Activated CD4-positive, alpha-beta memory T cell treated with anti-CD3 and anti-CD28 coated beads for 36 hours (primary cell): ENCODE measurements at regions of chr1 and their contacts with region 1.

Region 1: DNA sequence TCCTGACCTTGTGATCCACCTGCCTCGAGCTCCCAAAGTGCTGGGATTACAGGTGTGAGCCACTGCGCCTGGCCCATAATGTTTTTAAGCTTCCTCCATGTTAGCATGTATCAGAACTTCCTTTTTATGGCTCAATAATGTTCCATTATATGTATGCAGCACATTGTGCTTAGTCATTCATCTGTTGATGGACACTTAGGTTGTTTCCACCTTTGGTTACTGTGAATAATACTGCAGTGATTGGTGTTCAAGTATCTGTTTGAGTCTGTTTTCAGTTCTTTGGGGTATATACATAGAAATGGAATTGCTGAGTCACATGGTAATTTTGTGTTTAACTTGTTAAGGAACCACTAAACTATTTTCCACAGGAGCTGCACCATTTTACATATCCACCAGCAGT is 17.7 kb downstream of the CMPK1 start:
- DNase-seq: peak; percentile 20
- H3K4me3 Mint-ChIP-seq: no peak overlapping the region
- H3K27ac Mint-ChIP-seq: peak overlapping the region; percentile 88
- H3K4me1 Mint-ChIP-seq: peaks cover 31% of the 10 kb centered on the region
- H3K27me3 Mint-ChIP-seq: no peaks in the 10 kb centered on the region

Region 2: DNA sequence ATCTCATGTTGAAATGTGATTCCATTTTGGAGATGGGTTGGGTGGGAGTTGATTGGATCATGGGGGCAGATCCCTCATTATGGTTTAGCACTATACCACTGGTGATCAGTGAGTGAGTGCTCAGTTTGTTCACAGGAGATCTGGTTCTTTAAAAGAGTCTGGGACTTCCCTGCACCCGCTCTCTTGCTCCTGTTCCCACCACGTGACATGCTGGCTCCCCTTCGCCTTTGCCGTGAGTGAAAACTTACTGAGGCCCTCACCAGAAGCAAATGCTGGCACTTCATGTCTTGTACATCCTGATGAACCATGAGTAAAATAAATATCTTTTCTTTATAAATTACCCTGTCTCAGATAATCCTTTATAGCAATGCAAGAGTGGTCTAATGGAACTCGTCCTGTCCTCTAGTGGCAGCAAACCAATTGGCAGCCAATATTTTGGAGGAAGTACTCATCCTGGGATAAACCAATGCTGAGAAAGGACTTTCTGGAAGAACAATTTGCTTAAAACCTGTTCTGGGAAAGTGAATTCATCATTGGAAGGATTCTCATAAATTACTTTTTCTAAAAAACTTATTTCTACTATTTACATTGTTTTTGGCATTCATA is 382.2 kb before region 1 on chr1:
- CTCF ChIA-PET with region 1: no interaction called
- POLR2A ChIA-PET with region 1: no interaction called
- intact Hi-C with region 1: no loop called
- DNase-seq: no peak
- H3K4me3 Mint-ChIP-seq: no peak overlapping the region
- H3K27ac Mint-ChIP-seq: no peak overlapping the region
- H3K4me1 Mint-ChIP-seq: no peaks in the 10 kb centered on the region
- H3K27me3 Mint-ChIP-seq: peaks cover 14% of the 10 kb centered on the region

Region 3: DNA sequence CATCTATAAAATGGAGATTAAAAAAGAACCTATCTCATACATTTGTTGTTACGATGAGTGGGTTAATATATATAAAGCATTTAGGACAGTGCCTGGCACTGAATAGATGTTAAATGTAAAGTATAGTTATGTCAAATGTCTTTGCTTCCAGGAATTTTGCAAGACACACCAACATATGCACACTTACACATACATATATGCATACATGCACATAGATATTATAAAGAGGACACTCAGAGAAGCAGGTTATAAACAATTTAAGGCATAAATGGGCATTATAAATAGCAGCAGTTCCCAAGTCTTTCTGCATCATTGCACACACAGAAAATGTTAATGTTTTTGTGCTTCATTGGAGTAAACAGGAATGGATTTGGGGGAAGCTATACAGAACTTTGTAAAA is 314.5 kb before region 1 on chr1:
- CTCF ChIA-PET with region 1: no interaction called
- POLR2A ChIA-PET with region 1: no interaction called
- intact Hi-C with region 1: no loop called
- DNase-seq: no peak
- H3K4me3 Mint-ChIP-seq: no peak overlapping the region
- H3K27ac Mint-ChIP-seq: no peak overlapping the region
- H3K4me1 Mint-ChIP-seq: no peaks in the 10 kb centered on the region
- H3K27me3 Mint-ChIP-seq: peaks cover 5% of the 10 kb centered on the region

Region 4: DNA sequence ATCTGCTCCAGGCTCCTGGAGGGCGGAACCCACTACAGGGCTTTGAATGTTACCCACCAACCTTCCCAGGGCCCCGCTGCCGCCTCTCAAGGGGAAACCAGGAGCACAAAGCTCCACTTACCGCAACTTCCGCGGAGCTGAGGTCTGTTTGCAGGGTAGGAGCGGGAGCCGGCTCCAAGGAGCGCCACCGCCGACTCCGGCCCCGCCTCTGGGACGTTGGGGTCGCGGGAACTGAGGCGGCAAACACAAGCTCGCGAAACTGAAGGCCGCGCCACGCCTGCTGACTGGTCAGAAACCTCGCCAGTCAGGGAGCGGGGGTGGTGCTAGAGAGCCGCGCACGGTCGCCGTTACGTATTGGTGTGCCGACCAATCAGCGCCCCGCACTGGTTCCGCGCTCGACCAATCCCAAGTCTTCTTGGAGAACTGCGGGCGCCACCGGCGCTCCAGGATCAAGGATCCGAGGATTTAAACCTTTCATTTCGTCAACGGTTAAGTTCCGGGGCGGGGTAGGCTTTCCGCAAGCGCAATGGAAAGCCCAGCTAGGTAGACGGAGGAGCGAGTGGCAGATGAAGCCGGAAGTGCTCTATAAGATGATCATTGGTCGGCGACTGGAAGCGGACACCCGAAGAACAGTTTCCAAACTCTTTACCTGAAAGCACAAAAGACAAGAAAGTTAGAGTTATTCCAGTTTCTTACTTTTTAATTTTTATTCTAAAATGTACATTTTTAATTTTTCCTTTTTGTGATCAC is 37.2 kb before region 1 on chr1 and contains the start of gene STIL:
- CTCF ChIA-PET with region 1: no interaction called
- POLR2A ChIA-PET with region 1: interaction called, 11 read pairs
- intact Hi-C with region 1: loop called (anchors 1 kb)
- DNase-seq: peak; percentile 99
- H3K4me3 Mint-ChIP-seq: peak within 1 kb of the TSS; percentile 83
- H3K27ac Mint-ChIP-seq: peak within 1 kb of the TSS; percentile 95
- H3K4me1 Mint-ChIP-seq: peaks cover 6% of the 10 kb centered on the region
- H3K27me3 Mint-ChIP-seq: no peaks in the 10 kb centered on the region
- total RNA-seq, gene STIL: 31.3 to 33.6 TPM

Region 5: DNA sequence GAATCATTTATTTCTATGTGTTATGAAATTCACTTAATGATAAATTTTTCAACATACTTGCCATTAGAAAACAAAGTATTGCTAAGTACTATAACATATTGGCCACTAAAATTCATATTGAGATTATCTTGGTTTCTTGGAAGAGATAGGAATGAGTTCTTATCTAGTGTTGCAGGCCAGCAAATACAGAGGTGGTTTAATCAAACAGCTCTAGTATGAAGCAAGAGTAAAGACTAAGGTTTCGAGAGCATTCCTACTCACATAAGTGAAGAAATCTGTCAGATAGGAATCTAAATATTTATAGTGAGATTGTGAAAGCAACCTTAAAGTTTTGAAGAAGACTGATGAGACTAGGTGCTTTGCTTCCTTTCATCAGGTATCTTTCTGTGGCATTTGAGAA is 26.8 kb after region 1 on chr1:
- CTCF ChIA-PET with region 1: no interaction called
- POLR2A ChIA-PET with region 1: no interaction called
- intact Hi-C with region 1: no loop called
- DNase-seq: no peak
- H3K4me3 Mint-ChIP-seq: no peak overlapping the region
- H3K27ac Mint-ChIP-seq: no peak overlapping the region
- H3K4me1 Mint-ChIP-seq: no peaks in the 10 kb centered on the region
- H3K27me3 Mint-ChIP-seq: no peaks in the 10 kb centered on the region

Region 6: DNA sequence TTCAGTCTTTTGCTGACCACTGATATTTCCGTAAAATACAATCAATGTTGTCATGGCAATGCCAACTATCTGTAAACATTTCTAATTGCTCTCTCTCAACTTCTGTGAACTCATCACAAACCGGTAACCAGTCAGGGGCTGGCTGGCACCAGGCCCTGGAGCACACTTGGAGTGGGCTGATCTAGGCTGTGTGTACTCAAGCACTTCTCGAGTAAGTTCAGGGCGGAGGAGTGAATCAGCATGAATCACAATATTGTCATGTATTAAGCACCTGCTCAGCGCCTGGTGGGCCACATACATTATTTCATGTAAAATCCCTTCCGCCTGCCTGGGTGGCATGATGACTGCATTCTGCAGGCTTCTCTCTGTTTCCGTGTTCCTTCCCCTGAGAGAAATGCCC is 298.9 kb after region 1 on chr1:
- CTCF ChIA-PET with region 1: no interaction called
- POLR2A ChIA-PET with region 1: no interaction called
- intact Hi-C with region 1: no loop called
- DNase-seq: no peak
- H3K4me3 Mint-ChIP-seq: no peak overlapping the region
- H3K27ac Mint-ChIP-seq: no peak overlapping the region
- H3K4me1 Mint-ChIP-seq: no peaks in the 10 kb centered on the region
- H3K27me3 Mint-ChIP-seq: peaks cover 13% of the 10 kb centered on the region